CD4-positive, alpha-beta T cell (primary cell): ENCODE measurements at regions of chr1 and their contacts with region 1.

Region 1: DNA sequence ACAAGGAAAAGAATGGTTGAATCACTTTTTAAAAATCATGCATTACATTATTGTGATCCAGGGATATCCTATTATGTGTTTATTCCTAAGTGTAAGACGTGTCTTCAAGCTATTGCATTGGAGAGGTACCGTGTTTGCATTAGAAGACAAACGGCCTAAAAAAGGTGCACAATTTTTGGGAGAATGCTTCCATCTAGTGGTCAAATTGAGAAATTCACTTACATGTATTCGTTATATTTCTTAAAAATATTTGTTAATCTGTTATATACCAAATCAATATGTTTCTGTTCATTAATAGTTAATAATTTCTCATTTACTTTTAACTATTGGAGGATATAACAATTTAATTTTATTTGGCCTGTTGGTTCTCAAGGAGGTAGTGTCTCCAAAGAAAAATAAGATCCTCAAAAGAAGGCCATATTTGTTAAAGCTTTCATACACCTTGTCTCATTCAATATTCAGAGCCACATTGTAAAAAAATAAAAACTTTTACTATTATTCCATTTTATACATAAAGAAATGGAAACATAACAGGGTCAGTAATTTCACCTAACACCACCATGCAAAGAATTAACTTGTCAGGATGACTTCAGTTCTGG is 40.5 kb upstream of the KCTD3 start:
- DNase-seq: peak in 3 of 14 experiments; percentile 44 to 66 (median 63)
- ATAC-seq: peak; percentile 41
- H3K4me3 ChIP-seq: no peak overlapping the region
- H3K4me3 Mint-ChIP-seq: no peak overlapping the region
- H3K27ac ChIP-seq: no peak overlapping the region
- H3K27ac Mint-ChIP-seq: no peak overlapping the region
- H3K4me1 ChIP-seq: no peaks in the 10 kb centered on the region
- H3K4me1 Mint-ChIP-seq: peaks cover 5% of the 10 kb centered on the region
- H3K27me3 ChIP-seq: peaks cover 0 to 7% of the 10 kb centered on the region in 2 experiments
- H3K27me3 Mint-ChIP-seq: peaks cover 29% of the 10 kb centered on the region
- CTCF ChIP-seq: peak; percentile 74

Region 2: GRCh38 chr1:214213136-214213535 is 1313.5 kb before region 1 on chr1:
- CTCF ChIA-PET with region 1: no interaction called
- POLR2A ChIA-PET with region 1: no interaction called
- intact Hi-C with region 1: loop called (anchors 2 to 10 kb)
- DNase-seq: no peak
- ATAC-seq: no peak
- H3K4me3 ChIP-seq: no peak overlapping the region
- H3K4me3 Mint-ChIP-seq: no peak overlapping the region
- H3K27ac ChIP-seq: no peak overlapping the region
- H3K27ac Mint-ChIP-seq: no peak overlapping the region
- H3K4me1 ChIP-seq: peaks cover 3% of the 10 kb centered on the region
- H3K4me1 Mint-ChIP-seq: peaks cover 5% of the 10 kb centered on the region
- H3K27me3 ChIP-seq: peaks cover 4 to 6% of the 10 kb centered on the region in 2 experiments
- H3K27me3 Mint-ChIP-seq: peaks cover 30% of the 10 kb centered on the region
- CTCF ChIP-seq: no peak

Region 3: DNA sequence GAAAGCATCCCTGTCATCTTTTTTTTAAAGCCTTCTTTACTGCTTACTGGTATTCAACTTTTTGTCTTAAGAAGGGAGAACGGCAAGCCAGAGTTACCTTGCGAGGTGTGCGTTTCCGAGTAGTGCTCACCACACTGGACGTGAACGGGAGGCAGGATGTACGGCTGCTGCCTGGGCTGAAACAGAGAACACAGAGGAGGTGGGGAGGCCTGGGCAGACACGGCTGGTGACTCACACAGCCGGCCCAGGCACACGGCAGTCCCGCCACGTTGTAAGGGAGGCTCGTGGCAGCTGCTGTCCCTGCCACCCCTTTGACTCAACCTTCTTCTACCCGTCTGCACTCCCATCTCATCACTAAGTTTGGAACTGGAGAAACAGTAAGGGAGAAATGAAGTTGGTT is 1139.9 kb before region 1 on chr1:
- CTCF ChIA-PET with region 1: no interaction called
- POLR2A ChIA-PET with region 1: no interaction called
- intact Hi-C with region 1: loop called in 1 of 2 experiments (anchors 5 kb)
- DNase-seq: no peak
- ATAC-seq: no peak
- H3K4me3 ChIP-seq: no peak overlapping the region
- H3K4me3 Mint-ChIP-seq: no peak overlapping the region
- H3K27ac ChIP-seq: no peak overlapping the region
- H3K27ac Mint-ChIP-seq: no peak overlapping the region
- H3K4me1 ChIP-seq: no peaks in the 10 kb centered on the region
- H3K4me1 Mint-ChIP-seq: no peaks in the 10 kb centered on the region
- H3K27me3 ChIP-seq: no peaks in the 10 kb centered on the region
- H3K27me3 Mint-ChIP-seq: no peaks in the 10 kb centered on the region
- CTCF ChIP-seq: no peak

Region 4: GRCh38 chr1:215071078-215071477 is 455.6 kb before region 1 on chr1:
- CTCF ChIA-PET with region 1: no interaction called
- POLR2A ChIA-PET with region 1: no interaction called
- intact Hi-C with region 1: no loop called
- DNase-seq: no peak
- ATAC-seq: no peak
- H3K4me3 ChIP-seq: no peak overlapping the region
- H3K4me3 Mint-ChIP-seq: no peak overlapping the region
- H3K27ac ChIP-seq: no peak overlapping the region
- H3K27ac Mint-ChIP-seq: no peak overlapping the region
- H3K4me1 ChIP-seq: no peaks in the 10 kb centered on the region
- H3K4me1 Mint-ChIP-seq: no peaks in the 10 kb centered on the region
- H3K27me3 ChIP-seq: no peaks in the 10 kb centered on the region
- H3K27me3 Mint-ChIP-seq: peaks cover 9% of the 10 kb centered on the region
- CTCF ChIP-seq: no peak